Uterus (tissue), 4 donors: ENCODE measurements at regions of chr7 and their contacts with region 1.

Region 1: DNA sequence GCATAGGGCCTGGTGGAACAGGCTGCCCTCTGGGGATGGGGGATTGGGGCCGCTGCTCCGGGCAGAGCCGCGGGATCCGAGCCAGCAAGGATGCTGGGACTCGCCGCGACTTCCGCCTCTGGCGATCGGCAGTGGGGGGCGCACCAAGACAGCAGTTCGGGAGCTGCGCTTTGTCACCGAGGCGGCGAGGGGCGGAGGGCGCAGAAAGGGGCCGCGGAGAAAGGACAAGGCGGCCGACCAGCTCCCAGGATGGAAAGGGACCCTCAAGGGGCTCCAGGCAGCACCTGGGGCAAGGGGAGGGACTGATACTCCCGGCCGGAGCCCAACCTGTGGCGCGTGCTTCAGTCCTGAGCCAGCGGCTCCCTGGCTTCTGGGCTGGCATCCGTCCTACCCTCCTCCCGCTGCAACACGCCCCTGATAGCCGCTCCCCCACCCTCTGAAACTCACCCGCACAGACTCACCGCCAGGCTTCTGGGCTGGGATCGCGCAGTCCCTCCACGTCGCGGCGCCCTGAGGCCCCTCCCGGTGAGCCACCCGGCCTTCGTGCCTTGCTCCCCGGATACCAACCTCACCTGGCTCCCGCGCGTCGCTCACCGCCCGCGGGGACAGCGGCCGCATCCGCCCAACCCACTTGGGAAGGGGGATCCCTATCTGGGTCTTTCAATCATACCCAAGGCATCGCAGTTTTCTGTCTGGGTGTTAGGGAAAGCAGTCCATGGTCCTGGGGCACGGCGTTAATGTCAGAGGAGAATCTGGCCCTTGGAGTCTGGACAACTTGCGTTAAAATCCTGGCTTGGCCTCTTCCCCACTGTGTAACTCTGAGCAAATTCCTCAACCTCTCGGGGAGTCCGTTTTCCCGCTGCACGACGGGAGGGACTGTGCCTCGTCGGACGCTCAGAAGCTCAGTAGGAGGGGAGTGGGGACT is 7.0 kb upstream of the EVX1 start:
- DNase-seq: peak; percentile 42 to 46
- H3K4me3 ChIP-seq: peak overlapping the region; percentile 35 to 42
- H3K27ac ChIP-seq: no peak overlapping the region
- H3K4me1 ChIP-seq: peaks cover 0 to 7% of the 10 kb centered on the region in 2 donors
- H3K27me3 ChIP-seq: peaks cover 4 to 10% of the 10 kb centered on the region in 2 donors
- CTCF ChIP-seq: peak; percentile 44 to 58 (median 56)
- POLR2A ChIP-seq: no peak

Region 2: GRCh38 chr7:27269455-27269854 is 33.8 kb after region 1 on chr7:
- intact Hi-C with region 1: no loop called
- DNase-seq: no peak
- H3K4me3 ChIP-seq: no peak overlapping the region
- H3K27ac ChIP-seq: no peak overlapping the region
- H3K4me1 ChIP-seq: no peaks in the 10 kb centered on the region
- H3K27me3 ChIP-seq: peaks cover 0 to 4% of the 10 kb centered on the region in 2 donors
- CTCF ChIP-seq: no peak
- POLR2A ChIP-seq: no peak

Region 3: DNA sequence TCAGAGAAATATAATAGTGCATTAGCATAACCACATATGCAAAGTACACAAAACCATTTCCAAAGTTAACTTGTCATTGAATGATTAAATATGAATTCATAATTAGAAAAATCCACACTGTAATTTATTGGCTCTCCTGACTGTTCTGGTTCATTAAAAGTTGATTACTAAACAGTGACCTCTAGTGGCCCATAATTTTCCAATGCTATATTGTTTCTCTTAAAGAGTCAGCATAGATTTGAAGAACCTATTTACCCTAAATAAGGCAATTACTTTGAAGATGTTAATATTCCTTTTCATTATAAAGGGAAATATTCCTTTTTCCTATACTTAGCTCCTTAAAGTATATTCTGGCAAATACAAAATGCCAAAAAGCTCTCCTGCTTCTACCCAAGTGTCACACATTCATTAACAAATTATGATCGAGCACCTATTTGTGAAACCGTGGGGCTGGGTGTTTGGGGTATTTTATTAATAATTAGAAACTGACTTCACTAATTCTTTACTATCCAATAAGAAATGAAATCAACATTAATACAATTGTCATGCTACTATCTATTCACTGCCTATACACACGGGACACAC is 340.8 kb after region 1 on chr7:
- intact Hi-C with region 1: loop called (anchors 10 kb)
- DNase-seq: no peak
- H3K4me3 ChIP-seq: no peak overlapping the region
- H3K27ac ChIP-seq: no peak overlapping the region
- H3K4me1 ChIP-seq: no peaks in the 10 kb centered on the region
- H3K27me3 ChIP-seq: no peaks in the 10 kb centered on the region
- CTCF ChIP-seq: peak; percentile 54 to 73 (median 56)
- POLR2A ChIP-seq: no peak